Vagina (tissue), 2 donors: ENCODE measurements at regions of chr1 and their contacts with region 1.

Region 1: GRCh38 chr1:205658943-205659581 is 21.2 kb downstream of the SLC45A3 start:
- DNase-seq: no peak
- H3K4me3 ChIP-seq: no peak overlapping the region
- H3K27ac ChIP-seq: no peak overlapping the region
- H3K4me1 ChIP-seq: no peaks in the 10 kb centered on the region
- H3K27me3 ChIP-seq: no peaks in the 10 kb centered on the region
- CTCF ChIP-seq: peak; percentile 69 to 87 (median 82)
- POLR2A ChIP-seq: no peak

Region 2: GRCh38 chr1:205528887-205529825 is 129.9 kb before region 1 on chr1:
- intact Hi-C with region 1: loop called (anchors 2 kb)
- DNase-seq: no peak
- H3K4me3 ChIP-seq: peak overlapping the region; percentile 36 to 45
- H3K27ac ChIP-seq: no peak overlapping the region
- H3K4me1 ChIP-seq: peaks cover 6% of the 10 kb centered on the region
- H3K27me3 ChIP-seq: no peaks in the 10 kb centered on the region
- CTCF ChIP-seq: peak; percentile 87 to 96 (median 93)
- POLR2A ChIP-seq: no peak

Region 3: DNA sequence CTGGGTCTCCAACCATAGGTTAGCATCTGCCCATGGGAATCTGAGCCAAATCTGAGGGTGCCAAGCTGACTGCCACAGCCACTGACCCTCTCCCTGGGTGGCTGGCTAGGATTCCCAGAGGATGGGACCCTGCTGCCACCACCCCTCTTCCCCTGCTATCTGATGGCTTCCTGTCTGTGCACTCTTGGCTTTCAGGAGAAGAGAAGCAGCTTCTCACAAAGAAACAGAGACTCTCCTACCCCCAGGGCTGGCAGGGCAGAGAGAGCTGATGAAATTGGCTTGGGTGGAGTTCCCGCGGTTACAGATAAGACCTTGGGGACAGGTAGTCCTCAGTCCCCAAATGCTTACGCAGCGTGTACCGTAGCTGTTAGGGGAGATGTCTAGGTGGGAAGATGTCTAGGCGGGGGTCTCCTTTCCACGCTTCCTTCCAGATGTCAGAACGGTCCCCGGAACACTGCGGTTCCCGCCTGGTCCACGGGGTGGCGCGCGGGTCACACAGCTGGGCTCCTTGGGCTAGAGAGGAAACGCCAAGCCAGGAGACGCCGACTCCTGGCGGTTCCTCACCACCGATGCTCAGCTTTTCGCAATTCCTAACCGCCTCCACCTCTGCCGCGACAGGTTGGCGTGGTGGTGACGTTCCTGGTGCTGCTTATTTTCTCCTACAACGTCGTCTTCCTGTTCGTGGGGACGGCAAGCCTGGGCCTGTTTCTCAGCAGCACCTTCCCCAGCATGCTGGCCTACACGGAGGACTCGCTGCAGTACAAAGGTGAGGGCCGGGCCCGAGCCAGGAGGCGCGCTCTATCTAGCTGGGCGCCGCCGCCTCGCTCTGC is 67.3 kb before region 1 on chr1:
- intact Hi-C with region 1: loop called (anchors 5 kb)
- DNase-seq: peak; percentile 92 to 96
- H3K4me3 ChIP-seq: peak overlapping the region; percentile 26 to 43
- H3K27ac ChIP-seq: peak overlapping the region; percentile 59
- H3K4me1 ChIP-seq: peaks cover 14% of the 10 kb centered on the region
- H3K27me3 ChIP-seq: no peaks in the 10 kb centered on the region
- CTCF ChIP-seq: peak; percentile 99
- POLR2A ChIP-seq: no peak

Region 4: DNA sequence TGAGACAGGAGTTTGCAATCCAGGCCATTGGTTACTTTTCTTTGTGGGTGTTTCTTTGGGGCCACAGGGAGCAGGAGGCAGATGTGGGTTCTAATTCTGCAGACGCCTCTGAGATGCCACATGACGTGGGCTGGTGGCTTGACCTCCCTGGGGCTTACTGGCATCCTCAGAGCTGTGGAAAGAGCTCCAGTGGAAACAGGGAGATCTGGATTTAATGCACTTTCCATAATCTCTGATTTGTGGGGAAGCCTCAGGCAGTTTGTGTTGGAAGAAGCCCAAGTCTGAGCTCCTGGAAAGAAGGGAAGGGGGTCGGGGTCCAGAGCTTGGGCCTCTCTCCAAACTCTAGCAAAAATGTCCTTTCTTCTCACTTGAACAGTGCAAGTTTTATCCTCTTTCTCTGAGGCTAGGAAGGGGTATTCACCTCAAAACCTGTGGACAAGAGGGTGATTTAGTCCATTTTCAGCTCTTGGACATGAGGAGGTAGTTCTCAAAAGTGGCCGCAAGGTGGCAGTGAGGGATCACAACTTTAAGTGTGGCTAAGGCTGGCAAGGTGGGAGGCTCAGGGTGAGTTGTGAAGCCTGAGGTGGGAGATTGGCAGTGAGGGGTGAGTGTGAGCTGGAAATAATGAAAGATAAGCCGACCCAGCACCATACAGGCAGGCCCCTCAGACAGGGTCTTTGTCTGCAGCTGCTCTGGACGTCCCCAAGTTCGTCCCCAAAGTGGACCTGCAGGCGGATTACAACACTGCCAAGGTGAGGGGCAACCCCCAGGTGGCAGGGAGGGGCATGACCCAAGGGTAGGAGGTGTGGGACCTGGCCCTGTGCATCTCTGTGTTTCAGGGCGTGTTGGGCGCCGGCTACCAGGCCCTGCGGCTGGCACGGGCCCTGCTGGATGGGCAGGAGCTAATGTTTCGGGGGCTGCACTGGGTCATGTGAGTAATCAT is 820.4 kb after region 1 on chr1:
- intact Hi-C with region 1: no loop called
- DNase-seq: no peak
- H3K4me3 ChIP-seq: no peak overlapping the region
- H3K27ac ChIP-seq: no peak overlapping the region
- H3K4me1 ChIP-seq: peaks cover 4% of the 10 kb centered on the region
- H3K27me3 ChIP-seq: no peaks in the 10 kb centered on the region
- CTCF ChIP-seq: peak; percentile 62 to 78 (median 75)
- POLR2A ChIP-seq: no peak